GM12878 (cell line): ENCODE measurements at regions of chr3 and their contacts with region 1.

Region 1: DNA sequence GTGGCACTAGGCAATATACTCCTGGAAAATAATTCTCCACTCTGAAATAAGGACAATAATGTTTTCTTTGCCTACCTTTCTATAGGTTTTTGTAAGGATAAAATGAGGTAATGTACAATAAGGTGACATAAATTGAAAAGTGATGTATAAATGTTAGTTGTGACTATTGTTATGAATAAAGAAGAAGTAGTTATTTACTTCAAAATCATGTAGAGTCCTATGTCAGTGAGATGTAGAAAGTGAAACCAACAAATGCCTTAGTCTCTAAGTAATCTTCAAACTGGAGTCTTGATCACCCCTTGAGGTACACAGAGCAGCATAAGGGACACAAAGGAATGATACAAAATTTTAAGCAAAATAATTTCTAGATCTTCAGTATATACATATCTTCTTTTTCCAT is 60.3 kb upstream of the TP63 start:
- DNase-seq: peak; percentile 27
- ATAC-seq: peak; percentile 66
- H3K4me3 ChIP-seq: no peak overlapping the region
- H3K27ac ChIP-seq: peak overlapping the region; percentile 42
- H3K4me1 ChIP-seq: peaks cover 51% of the 10 kb centered on the region
- H3K27me3 ChIP-seq: no peaks in the 10 kb centered on the region
- CTCF ChIP-seq: no peak
- EP300 ChIP-seq: no peak
- POLR2A ChIP-seq: no peak
- RAD21 ChIP-seq: no peak

Region 2: DNA sequence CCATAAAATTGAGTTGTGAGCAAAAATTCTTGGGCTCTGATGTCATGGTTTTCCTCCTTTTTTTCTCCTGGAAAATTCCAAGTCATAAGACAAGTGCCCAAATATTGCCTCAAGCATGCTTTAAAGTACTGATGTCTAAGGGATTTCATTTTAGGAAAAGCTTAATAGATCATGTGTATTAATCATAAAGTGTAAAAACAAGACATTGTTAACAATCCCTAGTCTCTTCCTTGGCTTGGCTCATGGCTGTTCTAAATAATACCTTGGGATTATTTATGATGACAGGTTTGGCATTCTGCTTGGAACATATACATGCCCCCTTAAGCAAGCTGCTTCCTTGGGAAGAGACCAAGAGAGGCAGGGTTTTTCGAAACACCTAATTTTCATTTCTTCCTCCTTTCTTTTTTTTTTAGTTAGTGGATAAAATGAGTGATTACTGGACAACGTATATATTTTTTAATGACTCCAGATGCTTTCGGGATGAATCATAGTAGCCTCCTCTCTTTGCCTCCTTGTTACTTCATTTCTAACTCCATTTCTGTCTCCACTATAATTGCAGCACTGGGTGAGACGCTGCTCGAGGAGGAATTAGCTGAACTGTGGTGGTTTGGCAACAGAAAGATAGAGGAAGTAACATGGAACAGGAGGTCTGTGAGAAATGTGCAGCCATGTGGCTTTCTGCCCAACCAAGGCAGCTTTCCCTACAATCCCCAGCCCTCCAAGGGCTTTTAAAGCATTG is 294.3 kb before region 1 on chr3:
- CTCF ChIA-PET with region 1: no interaction called
- POLR2A ChIA-PET with region 1: no interaction called
- RAD21 ChIA-PET with region 1: interaction called, 4 read pairs
- SMC1A ChIA-PET with region 1: interaction called, 4 read pairs
- in situ Hi-C with region 1: no loop called
- intact Hi-C with region 1: loop called (anchors 5 kb)
- DNase-seq: no peak
- ATAC-seq: peak; percentile 48
- H3K4me3 ChIP-seq: no peak overlapping the region
- H3K27ac ChIP-seq: no peak overlapping the region
- H3K4me1 ChIP-seq: peaks cover 11% of the 10 kb centered on the region; the same call in 1 of the 2 replicates
- H3K27me3 ChIP-seq: 0 out of 4 replicates have a peak, but pooled peaks cover 0 to 1% of the 10 kb centered on the region in 2 experiments
- CTCF ChIP-seq: no peak
- EP300 ChIP-seq: no peak
- POLR2A ChIP-seq: no peak
- RAD21 ChIP-seq: no peak

Region 3: GRCh38 chr3:189404797-189405484 is 166.0 kb before region 1 on chr3:
- CTCF ChIA-PET with region 1: no interaction called
- POLR2A ChIA-PET with region 1: no interaction called
- RAD21 ChIA-PET with region 1: no interaction called
- SMC1A ChIA-PET with region 1: interaction called, 6 read pairs
- in situ Hi-C with region 1: no loop called
- intact Hi-C with region 1: loop called (anchors 5 kb)
- DNase-seq: peak; percentile 33
- ATAC-seq: peak; percentile 86
- H3K4me3 ChIP-seq: peak overlapping the region; percentile 23; the same call in 1 of the 2 replicates
- H3K27ac ChIP-seq: peak overlapping the region; percentile 22; the same call in 1 of the 2 replicates
- H3K4me1 ChIP-seq: no peaks in the 10 kb centered on the region
- H3K27me3 ChIP-seq: no peaks in the 10 kb centered on the region
- CTCF ChIP-seq: no peak
- EP300 ChIP-seq: no peak
- POLR2A ChIP-seq: no peak
- RAD21 ChIP-seq: no peak

Region 4: GRCh38 chr3:189588070-189588820 is 17.3 kb after region 1 on chr3:
- CTCF ChIA-PET with region 1: interaction called, 7 read pairs
- POLR2A ChIA-PET with region 1: interaction called, 3 read pairs
- RAD21 ChIA-PET with region 1: interaction called, 7 read pairs
- SMC1A ChIA-PET with region 1: interaction called, 58 read pairs
- in situ Hi-C with region 1: no loop called
- intact Hi-C with region 1: no loop called
- DNase-seq: no peak
- ATAC-seq: no peak
- H3K4me3 ChIP-seq: no peak overlapping the region
- H3K27ac ChIP-seq: 0 out of 2 replicates have a peak overlapping the region, but pooled peaks have one; percentile 26
- H3K4me1 ChIP-seq: peaks cover 18% of the 10 kb centered on the region
- H3K27me3 ChIP-seq: no peaks in the 10 kb centered on the region
- CTCF ChIP-seq: no peak
- EP300 ChIP-seq: no peak
- POLR2A ChIP-seq: no peak
- RAD21 ChIP-seq: no peak

Region 5: DNA sequence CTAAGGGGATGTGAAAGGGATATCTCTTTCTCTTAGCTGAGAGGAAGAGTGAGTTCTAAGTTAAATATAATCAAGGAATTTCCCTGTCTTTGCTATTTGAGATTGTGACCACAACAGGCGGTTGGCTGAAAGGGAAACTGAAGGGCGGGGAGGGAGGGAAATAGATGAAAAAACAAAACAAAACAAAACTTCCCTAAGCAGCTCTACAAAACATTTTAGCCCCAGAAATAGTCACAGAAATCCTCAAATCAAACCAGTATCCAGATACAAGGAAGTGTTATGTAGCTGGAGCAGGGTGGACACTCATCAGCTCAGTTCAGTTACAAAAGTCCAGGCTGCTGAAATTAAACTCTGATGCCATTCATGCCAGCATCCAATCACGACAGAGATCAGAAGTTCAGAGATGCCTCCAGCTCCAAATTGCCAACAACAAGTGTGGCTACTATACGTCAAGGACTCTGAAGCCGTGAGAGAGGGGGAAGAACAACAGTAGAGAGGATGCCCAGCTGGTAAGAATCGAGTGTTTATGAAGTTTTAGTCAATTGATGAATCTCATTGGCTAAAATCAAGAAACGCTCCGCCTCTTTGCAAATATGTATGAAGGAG is 60.0 kb after region 1 on chr3:
- CTCF ChIA-PET with region 1: interaction called, 3 read pairs
- POLR2A ChIA-PET with region 1: interaction called, 3 read pairs
- RAD21 ChIA-PET with region 1: interaction called, 17 read pairs
- SMC1A ChIA-PET with region 1: interaction called, 12 read pairs
- in situ Hi-C with region 1: no loop called
- intact Hi-C with region 1: loop called (anchors 5 kb)
- DNase-seq: peak; percentile 73
- ATAC-seq: peak; percentile 81
- H3K4me3 ChIP-seq: peak overlapping the region; percentile 65
- H3K27ac ChIP-seq: peak overlapping the region; percentile 86
- H3K4me1 ChIP-seq: peaks cover 13% of the 10 kb centered on the region; the same call in 1 of the 2 replicates
- H3K27me3 ChIP-seq: no peaks in the 10 kb centered on the region
- CTCF ChIP-seq: no peak
- EP300 ChIP-seq: peak in 1 of 2 experiments; percentile 41; a peak in 1 of 4 replicates
- POLR2A ChIP-seq: no peak
- RAD21 ChIP-seq: 0 out of 2 replicates have a peak, but pooled peaks have one; percentile 6

Region 6: GRCh38 chr3:189641776-189642175 is 70.9 kb after region 1 on chr3:
- CTCF ChIA-PET with region 1: interaction called, 3 read pairs
- POLR2A ChIA-PET with region 1: interaction called, 3 read pairs
- RAD21 ChIA-PET with region 1: interaction called, 10 read pairs
- SMC1A ChIA-PET with region 1: interaction called, 4 read pairs
- in situ Hi-C with region 1: no loop called
- intact Hi-C with region 1: no loop called
- DNase-seq: no peak
- ATAC-seq: peak; percentile 81
- H3K4me3 ChIP-seq: no peak overlapping the region
- H3K27ac ChIP-seq: no peak overlapping the region
- H3K4me1 ChIP-seq: peaks cover 8% of the 10 kb centered on the region; the same call in 1 of the 2 replicates
- H3K27me3 ChIP-seq: no peaks in the 10 kb centered on the region
- CTCF ChIP-seq: no peak
- EP300 ChIP-seq: no peak
- POLR2A ChIP-seq: no peak
- RAD21 ChIP-seq: no peak

Region 7: GRCh38 chr3:190414297-190414696 is 843.4 kb after region 1 on chr3:
- CTCF ChIA-PET with region 1: no interaction called
- POLR2A ChIA-PET with region 1: no interaction called
- RAD21 ChIA-PET with region 1: no interaction called
- SMC1A ChIA-PET with region 1: no interaction called
- in situ Hi-C with region 1: no loop called
- intact Hi-C with region 1: no loop called
- DNase-seq: no peak
- ATAC-seq: no peak
- H3K4me3 ChIP-seq: no peak overlapping the region
- H3K27ac ChIP-seq: no peak overlapping the region
- H3K4me1 ChIP-seq: no peaks in the 10 kb centered on the region
- H3K27me3 ChIP-seq: no peaks in the 10 kb centered on the region
- CTCF ChIP-seq: no peak
- EP300 ChIP-seq: no peak
- POLR2A ChIP-seq: no peak
- RAD21 ChIP-seq: no peak